Cardiac septum (tissue), 1 donor: ENCODE measurements at regions of chr9 and their contacts with region 1.

Region 1: GRCh38 chr9:122099271-122099869 is 6.3 kb upstream of the TTLL11 start:
- DNase-seq: peak; percentile 91

Region 2: DNA sequence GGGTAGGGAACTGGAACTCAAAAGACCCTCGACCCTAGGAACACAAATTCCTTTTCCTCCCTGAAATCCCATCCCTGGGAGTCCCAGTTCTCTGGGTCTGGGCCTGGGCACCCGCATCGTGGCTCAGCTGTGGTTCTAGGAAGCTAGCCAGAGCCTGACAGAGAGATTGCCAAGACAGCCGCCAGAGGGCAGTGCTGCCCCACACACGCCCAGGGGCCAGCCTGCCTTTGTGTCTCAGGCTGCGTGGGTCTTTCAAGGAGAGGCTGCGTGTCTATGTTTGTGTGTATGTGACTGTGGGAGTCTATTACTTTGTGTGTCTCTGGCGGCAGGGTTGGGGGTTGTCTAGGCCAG is 25.8 kb after region 1 on chr9:
- intact Hi-C with region 1: loop called (anchors 1 kb)
- DNase-seq: peak; percentile 89

Region 3: DNA sequence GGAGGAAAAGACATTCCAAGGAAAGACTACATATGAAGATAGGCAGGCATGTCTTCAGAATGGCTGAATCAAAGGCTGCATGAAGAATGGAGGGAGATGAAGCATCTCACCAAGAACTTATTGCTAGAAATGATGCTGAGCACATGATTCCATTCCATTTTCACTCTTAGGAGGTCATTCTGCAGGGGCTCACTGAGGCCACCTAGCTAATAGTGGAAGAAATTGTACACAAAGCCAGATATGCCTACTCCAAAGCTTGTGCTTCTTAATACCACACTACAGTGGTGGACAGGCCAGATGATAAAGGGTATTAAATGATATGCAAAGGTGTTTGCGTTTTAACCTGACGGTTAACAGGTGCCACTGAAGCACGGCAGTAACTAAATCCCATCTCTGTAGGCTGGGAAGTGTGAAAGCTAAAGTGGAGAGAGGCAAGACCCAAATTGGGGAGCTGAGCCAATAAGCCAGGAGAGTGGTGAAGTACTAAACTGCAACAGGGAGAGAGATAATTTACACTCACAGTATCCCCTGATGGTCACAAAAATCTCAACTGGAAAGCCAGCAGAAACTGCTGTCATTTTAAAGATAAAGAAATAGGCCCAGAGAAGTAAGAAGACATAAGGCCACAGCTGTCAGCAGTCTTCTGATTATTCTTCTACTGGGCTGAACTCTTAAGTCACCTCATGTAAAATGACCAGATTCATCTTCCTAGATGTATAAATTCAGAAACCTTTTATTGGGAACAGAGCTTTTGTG is 45.6 kb after region 1 on chr9:
- intact Hi-C with region 1: no loop called
- DNase-seq: no peak

Region 4: DNA sequence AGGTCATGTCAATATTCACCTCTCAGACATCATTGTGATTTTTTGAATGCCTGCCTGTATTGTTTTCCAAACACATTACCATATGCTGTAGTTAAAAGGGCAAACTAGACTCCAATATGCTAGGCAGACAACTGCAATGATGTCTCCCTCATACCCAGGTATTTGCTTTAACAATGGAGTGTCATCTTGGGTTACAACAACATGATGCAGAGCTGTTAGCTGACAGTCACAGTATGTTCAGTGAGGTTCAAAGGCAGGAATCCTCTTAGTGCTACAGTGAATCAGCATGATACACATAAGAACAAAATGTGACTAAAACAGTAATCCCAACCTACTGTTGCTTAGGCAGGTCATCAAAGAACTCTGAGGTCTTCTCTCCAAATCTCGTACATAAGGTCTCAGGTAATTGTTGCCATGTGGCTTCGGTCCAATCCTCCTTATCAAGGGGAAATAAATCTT is 354.3 kb after region 1 on chr9:
- intact Hi-C with region 1: loop called (anchors 5 kb)
- DNase-seq: no peak